ENCODE measurements at regions of chr4 and their contacts with region 1.

Region 1: GRCh38 chr4:4260253-4260652 is 12.2 kb upstream of the TMEM128 start:
- DNase-seq: peak; percentile 55

Region 2: DNA sequence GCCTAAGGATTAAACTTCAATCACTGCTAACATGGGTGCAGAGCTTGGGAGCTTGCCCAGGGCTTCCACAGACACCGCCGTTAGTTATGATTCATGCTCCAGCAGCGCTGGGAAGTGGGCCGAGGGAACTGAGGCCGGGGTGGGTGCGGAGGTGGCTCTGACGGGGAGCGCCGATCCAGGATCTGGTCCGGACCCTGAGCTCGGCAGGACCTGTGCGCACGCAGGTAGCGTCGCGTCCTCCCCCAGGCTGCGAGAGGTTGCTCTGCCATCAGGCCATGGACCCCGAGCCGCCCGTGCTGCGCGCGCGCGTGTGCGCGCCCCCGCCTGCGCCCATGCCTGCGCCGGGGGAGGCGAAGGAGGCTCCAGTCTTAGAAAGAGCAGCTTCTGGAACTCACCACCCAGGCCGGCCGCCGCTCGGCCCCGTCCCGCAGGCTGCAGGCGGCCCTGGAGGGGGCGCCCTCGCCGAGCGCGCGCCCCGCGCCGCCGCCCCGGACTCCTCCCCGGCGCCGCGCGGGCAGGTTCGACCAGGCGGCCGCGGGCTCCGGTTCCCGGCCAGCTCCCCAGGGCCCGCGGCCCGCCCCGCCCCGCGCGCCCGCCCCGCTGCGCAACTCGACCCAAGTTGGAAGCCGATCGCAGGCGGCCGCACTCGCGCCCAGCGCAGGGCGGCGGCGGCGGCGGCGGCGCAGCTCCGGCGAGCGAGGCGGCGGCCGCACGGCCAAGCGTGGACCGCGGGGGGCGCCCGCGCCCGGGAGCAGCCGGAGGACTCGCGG is 494.8 kb before region 1 on chr4:
- CTCF ChIA-PET with region 1: no interaction called
- POLR2A ChIA-PET with region 1: no interaction called
- DNase-seq: peak; percentile 78

Region 3: DNA sequence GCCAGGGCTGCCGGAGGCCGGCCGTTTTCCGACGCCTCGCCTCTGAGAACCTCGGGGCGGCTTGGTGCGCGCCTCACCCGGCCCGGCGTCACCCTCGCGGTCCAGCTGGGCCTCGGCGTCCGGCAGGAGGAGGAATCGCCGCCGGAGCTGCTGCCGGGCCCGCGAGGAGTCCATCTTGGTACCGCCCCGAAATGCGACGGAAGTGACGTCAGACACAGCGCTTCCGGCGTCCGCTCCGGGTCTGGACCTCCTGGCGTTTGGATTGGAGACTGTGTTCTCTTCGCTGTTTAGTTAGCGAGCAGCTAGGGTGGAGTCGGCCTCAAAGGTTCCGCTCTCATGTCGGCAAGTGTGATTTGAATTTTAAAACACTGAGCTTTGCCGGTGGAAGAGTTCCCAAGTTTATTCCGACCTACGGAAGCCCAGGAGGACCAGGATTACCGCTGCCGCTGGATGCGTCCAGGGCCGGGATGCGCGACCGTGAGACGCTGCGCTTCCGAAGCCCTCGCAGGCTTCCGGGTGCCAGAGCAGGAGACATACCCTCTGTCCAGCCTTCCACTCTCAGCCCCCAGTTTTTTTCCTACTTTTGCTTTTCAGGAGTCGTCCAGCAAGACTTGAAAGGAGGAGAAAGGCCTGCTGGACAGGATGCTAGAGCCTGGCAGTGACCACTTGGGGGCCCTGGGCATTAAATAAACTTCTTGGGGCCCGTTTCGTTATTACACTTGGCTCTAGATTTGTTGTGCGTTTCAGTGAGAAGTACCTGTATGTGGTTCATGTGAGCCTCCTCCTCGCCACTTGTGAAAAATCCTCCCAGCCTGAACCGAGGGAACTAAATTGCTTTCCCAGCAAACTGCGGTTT is 12.0 kb before region 1 on chr4 and contains the start of gene TMEM128:
- CTCF ChIA-PET with region 1: interaction called, 4 read pairs
- POLR2A ChIA-PET with region 1: interaction called, 19 read pairs
- DNase-seq: peak; percentile 97

Measured in HEK293T (cell line).